ENCODE measurements at regions of chr14 and their contacts with region 1.

Region 1: DNA sequence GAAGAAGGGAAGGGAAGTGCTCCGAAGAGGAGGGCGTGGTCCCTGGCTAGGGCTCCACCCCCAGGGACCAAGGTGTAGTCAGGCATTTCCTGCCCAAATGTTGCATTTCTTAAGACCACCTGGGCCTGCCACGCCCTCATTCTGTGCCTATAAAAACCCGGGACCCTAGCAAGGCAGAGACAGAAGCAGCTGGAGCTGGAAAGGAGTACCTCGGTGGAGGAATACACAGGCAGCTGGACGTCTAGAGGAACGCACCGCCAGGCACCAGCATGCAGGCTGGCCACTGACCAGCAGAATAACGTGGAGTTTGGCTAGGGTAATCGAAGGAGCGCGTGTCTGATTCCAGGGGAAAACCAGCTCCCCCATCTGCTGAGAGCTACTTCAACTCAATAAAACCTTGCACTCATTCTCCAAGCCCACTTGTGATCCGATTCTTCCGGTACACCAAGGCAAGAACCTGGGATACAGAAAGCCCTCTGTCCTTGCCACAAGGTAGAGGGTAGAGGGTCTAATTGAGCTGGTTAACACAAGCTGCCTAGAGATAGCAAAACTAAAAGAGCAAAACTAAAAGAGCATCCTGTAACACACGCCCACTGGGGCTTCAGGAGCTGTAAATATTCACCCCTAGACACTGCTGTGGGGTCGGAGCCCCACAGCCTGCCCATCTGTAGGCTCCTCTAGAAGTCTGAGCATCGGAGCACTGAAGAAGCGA is 21.0 kb downstream of the CFL2 start:
- DNase-seq: peak; percentile 70
- H3K4me3 ChIP-seq: peak overlapping the region in 1 of 4 experiments; percentile 28; a peak in 2 of 8 replicates
- H3K27ac ChIP-seq: no peak overlapping the region
- H3K4me1 ChIP-seq: peaks cover 0 to 6% (median under 1%) of the 10 kb centered on the region in 4 experiments; a peak in 3 of 7 replicates
- H3K27me3 ChIP-seq: 0 out of 7 replicates have a peak, but pooled peaks cover 0 to 2% (median 0%) of the 10 kb centered on the region in 4 experiments
- CTCF ChIP-seq: no peak
- EP300 ChIP-seq: no peak
- POLR2A ChIP-seq: peak; percentile 86 to 92
- RAD21 ChIP-seq: no peak

Region 2: GRCh38 chr14:34461334-34462131 is 231.9 kb before region 1 on chr14:
- CTCF ChIA-PET with region 1: no interaction called
- POLR2A ChIA-PET with region 1: no interaction called
- DNase-seq: no peak
- H3K4me3 ChIP-seq: peak overlapping the region; percentile 60 to 92 (median 88)
- H3K27ac ChIP-seq: peak overlapping the region; percentile 85; the same call in 1 of the 2 replicates
- H3K4me1 ChIP-seq: peaks cover 0 to 6% (median 4%) of the 10 kb centered on the region in 4 experiments; a peak in 4 of 7 replicates
- H3K27me3 ChIP-seq: no peaks in the 10 kb centered on the region
- CTCF ChIP-seq: no peak
- EP300 ChIP-seq: no peak
- POLR2A ChIP-seq: peak in 1 of 2 experiments; percentile 71; a peak in 2 of 3 replicates
- RAD21 ChIP-seq: no peak

Region 3: DNA sequence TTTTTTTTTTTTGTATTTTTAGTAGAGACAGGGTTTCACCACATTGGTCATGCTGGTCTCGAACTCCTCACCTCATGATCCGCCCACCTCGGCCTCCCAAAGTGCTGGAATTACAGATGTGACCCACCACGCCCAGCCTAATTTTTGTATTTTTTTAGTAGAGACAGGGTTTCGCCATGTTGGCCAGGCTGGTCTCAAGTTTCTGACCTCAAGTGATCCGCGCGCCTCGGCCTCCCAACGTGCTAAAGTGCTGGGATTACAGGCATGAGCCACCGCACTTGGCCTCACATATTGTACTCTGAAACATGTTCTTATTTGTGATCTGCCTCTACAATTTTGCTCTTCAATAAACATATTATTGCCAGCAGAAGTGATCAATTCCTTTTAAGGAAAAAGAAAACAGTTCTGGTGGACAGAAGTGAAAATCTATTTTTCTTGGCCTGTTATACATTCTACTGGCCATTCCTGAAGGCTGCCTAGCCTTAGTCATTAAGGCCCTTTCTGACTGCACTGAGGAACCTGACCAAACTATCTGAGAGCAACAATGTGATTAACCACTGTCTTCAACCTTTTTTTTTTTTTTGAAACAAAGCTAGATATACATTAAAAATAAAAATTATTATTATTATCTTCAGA is 99.5 kb before region 1 on chr14:
- CTCF ChIA-PET with region 1: no interaction called
- POLR2A ChIA-PET with region 1: no interaction called
- DNase-seq: no peak
- H3K4me3 ChIP-seq: no peak overlapping the region
- H3K27ac ChIP-seq: no peak overlapping the region
- H3K4me1 ChIP-seq: no peaks in the 10 kb centered on the region
- H3K27me3 ChIP-seq: no peaks in the 10 kb centered on the region
- CTCF ChIP-seq: no peak
- EP300 ChIP-seq: no peak
- POLR2A ChIP-seq: no peak
- RAD21 ChIP-seq: no peak

Region 4: GRCh38 chr14:34707722-34708121 is 14.3 kb after region 1 on chr14:
- CTCF ChIA-PET with region 1: interaction called, 5 read pairs
- POLR2A ChIA-PET with region 1: interaction called, 31 read pairs
- DNase-seq: no peak
- H3K4me3 ChIP-seq: no peak overlapping the region
- H3K27ac ChIP-seq: no peak overlapping the region
- H3K4me1 ChIP-seq: no peaks in the 10 kb centered on the region
- H3K27me3 ChIP-seq: no peaks in the 10 kb centered on the region
- CTCF ChIP-seq: no peak
- EP300 ChIP-seq: no peak
- POLR2A ChIP-seq: no peak
- RAD21 ChIP-seq: no peak

Region 5: GRCh38 chr14:34714320-34715126 is 21.1 kb after region 1 on chr14 and contains the start of gene CFL2:
- CTCF ChIA-PET with region 1: interaction called, 3 read pairs
- POLR2A ChIA-PET with region 1: interaction called, 31 read pairs
- DNase-seq: peak; percentile 46 to 85
- H3K4me3 ChIP-seq: peak within 1 kb of the TSS; percentile 73 to 99 (median 88)
- H3K27ac ChIP-seq: peak within 1 kb of the TSS; percentile 88
- H3K4me1 ChIP-seq: no peaks in the 10 kb centered on the region
- H3K27me3 ChIP-seq: peaks cover 0 to 4% (median 0%) of the 10 kb centered on the region in 4 experiments; a peak in 3 of 7 replicates
- CTCF ChIP-seq: no peak
- EP300 ChIP-seq: no peak
- POLR2A ChIP-seq: peak; percentile 80 to 90
- RAD21 ChIP-seq: no peak
- total RNA-seq, gene CFL2: 18.1 and 20.5 TPM in 2 replicates